Breast epithelium (tissue), 4 donors: ENCODE measurements at regions of chr12 and their contacts with region 1.

Region 1: DNA sequence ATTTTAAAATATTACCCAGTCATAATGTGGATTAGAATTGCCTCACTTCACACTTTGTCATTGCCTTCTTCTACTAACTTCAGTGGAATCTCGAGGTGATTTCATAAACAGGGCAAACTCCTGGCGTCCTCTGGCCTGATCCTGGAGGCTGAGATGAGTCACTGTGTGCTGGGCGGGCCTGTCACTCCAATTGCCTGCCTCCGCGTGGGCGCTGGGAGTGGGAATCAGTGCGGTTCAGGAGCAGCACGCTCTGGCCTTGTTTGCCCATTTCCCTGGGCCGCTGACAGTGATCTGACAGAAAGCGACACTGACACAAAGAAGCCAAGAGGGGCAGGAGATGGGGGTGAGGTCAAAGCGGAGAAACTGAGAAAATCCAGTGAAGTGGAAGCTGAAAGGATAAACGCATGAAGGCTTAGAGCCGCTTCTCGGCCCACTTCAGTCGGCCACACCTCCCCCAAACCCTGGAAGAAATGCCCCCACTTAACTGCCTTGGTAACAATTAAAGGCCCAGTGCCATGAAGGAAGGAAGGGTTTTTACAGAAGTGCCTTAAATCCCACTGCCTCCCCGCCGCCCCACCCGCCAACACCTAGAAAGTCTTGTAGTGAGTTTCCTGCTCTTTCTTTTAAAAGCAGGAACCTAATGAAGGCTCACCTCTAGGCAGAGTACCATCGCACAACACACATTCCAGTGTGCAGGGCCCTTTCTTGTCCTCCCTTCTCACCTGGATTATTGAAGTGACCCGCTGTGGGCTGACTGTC is 29.8 kb downstream of the LGR5 start:
- DNase-seq: no peak
- H3K4me3 ChIP-seq: no peak overlapping the region
- H3K27ac ChIP-seq: no peak overlapping the region
- H3K4me1 ChIP-seq: no peaks in the 10 kb centered on the region
- H3K27me3 ChIP-seq: no peaks in the 10 kb centered on the region
- CTCF ChIP-seq: no peak
- POLR2A ChIP-seq: no peak

Region 2: DNA sequence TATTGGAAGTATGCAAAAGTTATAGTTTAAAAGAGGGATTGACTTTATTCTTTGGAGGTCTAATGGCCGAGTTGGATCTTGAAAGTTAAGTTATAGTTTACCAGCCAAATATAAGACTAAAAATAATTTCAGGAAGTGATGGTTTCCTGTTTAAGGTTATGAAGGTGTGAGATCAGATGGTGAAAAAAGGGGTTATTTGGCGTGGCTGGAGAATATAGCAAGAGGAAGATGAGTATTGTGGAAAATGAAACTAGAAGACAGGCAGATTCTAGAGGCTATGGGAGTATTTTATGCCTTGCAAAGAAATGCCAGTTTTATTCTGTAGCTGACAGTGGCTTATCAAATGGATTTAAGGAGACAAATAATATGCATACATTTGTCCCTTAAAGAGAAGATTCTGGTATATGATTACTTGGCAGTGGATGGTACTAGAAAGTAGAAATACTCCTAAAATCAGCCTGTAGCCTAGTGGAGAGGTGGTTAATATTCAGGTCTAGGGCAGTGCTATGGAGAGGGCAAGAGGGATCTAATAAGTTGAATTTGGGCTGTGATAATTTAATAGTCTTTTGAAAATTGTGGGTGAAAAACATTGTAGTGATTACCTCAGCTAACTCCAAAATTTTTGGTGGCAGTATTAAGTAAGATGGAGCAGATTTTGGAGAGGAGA is 1976.4 kb after region 1 on chr12:
- intact Hi-C with region 1: loop called (anchors 10 kb)
- DNase-seq: no peak
- H3K4me3 ChIP-seq: no peak overlapping the region
- H3K27ac ChIP-seq: no peak overlapping the region
- H3K4me1 ChIP-seq: no peaks in the 10 kb centered on the region
- H3K27me3 ChIP-seq: no peaks in the 10 kb centered on the region
- CTCF ChIP-seq: no peak
- POLR2A ChIP-seq: no peak